ENCODE measurements at regions of chr22 and their contacts with region 1.

Region 1: GRCh38 chr22:50620593-50621355 is 7.2 kb downstream of the ARSA start:
- DNase-seq: peak; percentile 86
- ATAC-seq: peak; percentile 86
- H3K4me3 ChIP-seq: peak overlapping the region; percentile 70
- H3K27ac ChIP-seq: peak overlapping the region; percentile 97
- H3K4me1 ChIP-seq: peaks cover 28% of the 10 kb centered on the region
- H3K27me3 ChIP-seq: no peaks in the 10 kb centered on the region
- CTCF ChIP-seq: peak in 1 of 3 experiments; percentile 74; a peak in 2 of 6 replicates
- EP300 ChIP-seq: no peak
- POLR2A ChIP-seq: peak; percentile 71
- RAD21 ChIP-seq: no peak

Region 2: GRCh38 chr22:50399751-50400331 is 220.9 kb before region 1 on chr22:
- CTCF ChIA-PET with region 1: interaction called, 10 read pairs
- POLR2A ChIA-PET with region 1: no interaction called
- RAD21 ChIA-PET with region 1: no interaction called
- SMC1A ChIA-PET with region 1: interaction called, 5 read pairs
- in situ Hi-C with region 1: no loop called
- intact Hi-C with region 1: no loop called
- DNase-seq: no peak
- ATAC-seq: peak; percentile 84
- H3K4me3 ChIP-seq: no peak overlapping the region
- H3K27ac ChIP-seq: no peak overlapping the region
- H3K4me1 ChIP-seq: peaks cover 12% of the 10 kb centered on the region
- H3K27me3 ChIP-seq: no peaks in the 10 kb centered on the region
- CTCF ChIP-seq: peak; percentile 48 to 61 (median 52)
- EP300 ChIP-seq: no peak
- POLR2A ChIP-seq: no peak
- RAD21 ChIP-seq: peak; percentile 32; the same call in 1 of the 2 replicates

Region 3: DNA sequence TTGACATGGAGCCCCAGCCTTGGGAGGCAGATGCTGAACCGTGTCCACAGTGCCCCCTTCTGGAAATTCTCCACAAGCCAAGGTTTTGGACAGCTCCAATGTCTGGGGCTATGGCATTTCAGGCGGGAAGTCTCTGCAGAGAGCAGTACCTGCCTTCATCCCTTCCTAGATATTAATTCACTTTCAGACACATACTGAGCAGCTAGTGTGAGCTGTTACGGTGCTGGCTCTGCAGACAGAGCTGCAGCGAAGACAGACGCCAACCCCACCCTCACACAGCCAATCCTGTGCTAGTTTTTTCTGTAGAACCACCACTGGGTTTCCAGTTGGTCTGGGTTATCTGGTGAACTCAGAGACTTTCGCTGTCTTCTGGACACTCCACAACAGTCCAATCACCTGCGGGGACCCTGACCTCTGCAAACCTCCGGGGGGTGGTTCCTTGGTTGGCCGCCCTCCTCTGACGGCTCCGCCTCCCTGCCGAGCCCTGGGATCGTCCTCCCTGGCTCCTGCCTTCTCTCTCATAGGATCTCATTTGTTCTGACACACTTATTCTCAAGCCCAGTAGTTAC is 122.4 kb before region 1 on chr22:
- CTCF ChIA-PET with region 1: interaction called, 28 read pairs
- POLR2A ChIA-PET with region 1: no interaction called
- RAD21 ChIA-PET with region 1: interaction called, 16 read pairs
- SMC1A ChIA-PET with region 1: interaction called, 4 read pairs
- in situ Hi-C with region 1: no loop called
- intact Hi-C with region 1: no loop called
- DNase-seq: no peak
- ATAC-seq: peak; percentile 96
- H3K4me3 ChIP-seq: no peak overlapping the region
- H3K27ac ChIP-seq: no peak overlapping the region
- H3K4me1 ChIP-seq: no peaks in the 10 kb centered on the region
- H3K27me3 ChIP-seq: no peaks in the 10 kb centered on the region
- CTCF ChIP-seq: peak; percentile 70 to 79 (median 71)
- EP300 ChIP-seq: no peak
- POLR2A ChIP-seq: no peak
- RAD21 ChIP-seq: peak; percentile 82

Region 4: DNA sequence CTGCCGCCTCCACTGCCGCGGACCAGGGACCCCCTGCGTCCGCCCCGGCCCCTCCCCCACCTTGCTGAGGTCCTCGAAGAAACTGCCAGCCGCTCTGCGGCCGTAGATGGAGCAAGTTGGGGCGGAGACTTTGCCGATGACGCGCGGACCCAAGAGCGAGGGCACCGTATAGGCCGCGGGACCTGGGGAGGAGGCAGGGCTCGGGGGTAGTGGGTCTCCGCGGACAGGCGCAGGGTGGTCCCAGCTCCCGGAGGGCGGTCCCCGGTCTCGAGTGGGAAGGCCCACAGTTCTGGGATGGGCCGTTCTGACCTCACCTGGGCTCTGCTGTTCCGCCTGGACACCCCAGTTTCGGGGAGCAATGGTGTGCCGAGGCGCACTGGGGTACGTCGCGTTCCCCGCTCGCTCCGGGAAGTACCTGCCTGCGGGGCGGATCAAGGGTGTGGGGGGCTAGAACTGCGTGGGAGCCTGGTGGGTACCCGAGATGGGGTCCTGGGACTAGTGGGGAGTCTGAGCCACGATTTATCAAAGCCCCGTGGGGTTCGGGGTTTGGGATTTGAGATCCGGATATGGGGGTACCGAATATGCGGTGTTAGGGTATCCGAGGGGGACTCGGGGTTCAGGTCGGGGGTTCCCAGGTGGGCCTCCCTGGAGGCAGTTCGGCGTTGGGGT is 89.8 kb before region 1 on chr22:
- CTCF ChIA-PET with region 1: interaction called, 32 read pairs
- POLR2A ChIA-PET with region 1: interaction called, 11 read pairs
- RAD21 ChIA-PET with region 1: interaction called, 43 read pairs
- SMC1A ChIA-PET with region 1: interaction called, 20 read pairs
- in situ Hi-C with region 1: loop called (anchors 5 kb)
- intact Hi-C with region 1: loop called (anchors 1 kb)
- DNase-seq: no peak
- ATAC-seq: peak; percentile 53
- H3K4me3 ChIP-seq: peak overlapping the region; percentile 78
- H3K27ac ChIP-seq: peak overlapping the region; percentile 100
- H3K4me1 ChIP-seq: peaks cover 41% of the 10 kb centered on the region
- H3K27me3 ChIP-seq: no peaks in the 10 kb centered on the region
- CTCF ChIP-seq: no peak
- EP300 ChIP-seq: no peak
- POLR2A ChIP-seq: no peak
- RAD21 ChIP-seq: no peak

Region 5: GRCh38 chr22:50562523-50563412 is 58.0 kb before region 1 on chr22 and contains the start of gene SYCE3:
- CTCF ChIA-PET with region 1: interaction called, 18 read pairs
- POLR2A ChIA-PET with region 1: no interaction called
- RAD21 ChIA-PET with region 1: interaction called, 17 read pairs
- SMC1A ChIA-PET with region 1: interaction called, 3 read pairs
- in situ Hi-C with region 1: no loop called
- intact Hi-C with region 1: no loop called
- DNase-seq: peak; percentile 75
- ATAC-seq: peak; percentile 98
- H3K4me3 ChIP-seq: peak within 1 kb of the TSS; percentile 94
- H3K27ac ChIP-seq: no peak within 1 kb of the TSS
- H3K4me1 ChIP-seq: no peaks in the 10 kb centered on the region
- H3K27me3 ChIP-seq: peaks cover 0 to 1% of the 10 kb centered on the region in 2 experiments; a peak in 1 of 4 replicates
- CTCF ChIP-seq: peak; percentile 92 to 94 (median 92)
- EP300 ChIP-seq: no peak
- POLR2A ChIP-seq: peak; percentile 66
- RAD21 ChIP-seq: peak; percentile 70
- polyA plus RNA-seq, gene SYCE3: 0.76 to 0.91 TPM

Measured in GM12878 (cell line).